ENCODE measurements at regions of chr5 and their contacts with region 1.

Region 1: GRCh38 chr5:79560771-79561524 is 47.0 kb upstream of the HOMER1 start:
- DNase-seq: no peak
- H3K4me3 ChIP-seq: no peak overlapping the region
- H3K27ac ChIP-seq: peak overlapping the region; percentile 59
- H3K4me1 ChIP-seq: peaks cover 23% of the 10 kb centered on the region
- H3K27me3 ChIP-seq: no peaks in the 10 kb centered on the region
- CTCF ChIP-seq: no peak

Region 2: DNA sequence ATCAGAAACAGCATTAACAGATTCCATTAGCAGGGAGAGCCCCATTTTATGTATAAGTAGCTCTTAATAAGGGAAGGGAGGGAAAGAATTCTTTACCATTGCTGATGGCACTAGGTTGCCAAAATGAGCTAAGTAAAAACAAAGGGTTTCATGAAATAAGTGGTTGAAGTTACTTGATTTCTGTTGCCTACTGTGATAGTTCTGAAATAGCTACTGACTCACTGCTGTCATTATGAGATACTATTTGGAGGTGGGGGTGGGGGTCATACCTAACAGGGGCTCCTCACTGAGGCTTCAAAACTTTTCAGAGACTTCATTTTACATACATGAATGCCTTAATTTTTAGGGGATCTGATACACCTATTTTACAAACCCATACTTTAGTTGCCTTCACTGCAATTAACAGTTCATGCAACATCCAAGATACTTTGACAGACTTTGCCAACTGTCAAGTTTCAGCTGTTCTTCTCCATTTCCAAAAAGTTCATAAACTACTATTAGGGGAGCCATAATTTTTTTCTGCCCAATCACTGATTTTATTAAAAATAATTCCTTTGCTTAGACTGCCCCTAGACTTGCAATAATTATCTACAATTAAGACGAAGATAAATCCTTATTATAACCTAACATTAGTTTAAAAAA is 51.6 kb before region 1 on chr5:
- CTCF ChIA-PET with region 1: no interaction called
- POLR2A ChIA-PET with region 1: no interaction called
- intact Hi-C with region 1: loop called (anchors 1 kb)
- DNase-seq: no peak
- H3K4me3 ChIP-seq: peak overlapping the region; percentile 4; the same call in 1 of the 2 replicates
- H3K27ac ChIP-seq: no peak overlapping the region
- H3K4me1 ChIP-seq: peaks cover 60% of the 10 kb centered on the region
- H3K27me3 ChIP-seq: no peaks in the 10 kb centered on the region
- CTCF ChIP-seq: no peak

Region 3: DNA sequence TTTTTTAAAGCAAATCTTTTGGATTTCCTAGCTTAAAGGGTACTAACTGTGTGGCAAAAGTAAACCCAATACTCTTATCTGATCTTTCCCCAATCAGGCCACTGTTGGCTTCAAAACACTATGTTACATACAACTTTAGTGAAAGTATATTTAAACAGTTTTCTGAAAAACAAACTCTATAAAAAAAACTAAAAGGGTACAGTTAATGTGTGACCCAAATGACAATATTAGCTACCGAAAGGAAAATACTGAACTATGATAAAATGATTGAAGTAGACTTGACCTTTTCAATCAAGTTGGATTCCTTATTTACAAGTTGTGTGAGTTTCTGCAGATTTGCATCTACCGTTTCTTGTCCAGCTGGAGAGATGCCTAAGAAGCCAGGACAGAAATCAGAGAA is 424.3 kb after region 1 on chr5:
- CTCF ChIA-PET with region 1: interaction called, 11 read pairs
- POLR2A ChIA-PET with region 1: no interaction called
- intact Hi-C with region 1: no loop called
- DNase-seq: no peak
- H3K4me3 ChIP-seq: no peak overlapping the region
- H3K27ac ChIP-seq: no peak overlapping the region
- H3K4me1 ChIP-seq: peaks cover 10% of the 10 kb centered on the region
- H3K27me3 ChIP-seq: no peaks in the 10 kb centered on the region
- CTCF ChIP-seq: no peak

Region 4: DNA sequence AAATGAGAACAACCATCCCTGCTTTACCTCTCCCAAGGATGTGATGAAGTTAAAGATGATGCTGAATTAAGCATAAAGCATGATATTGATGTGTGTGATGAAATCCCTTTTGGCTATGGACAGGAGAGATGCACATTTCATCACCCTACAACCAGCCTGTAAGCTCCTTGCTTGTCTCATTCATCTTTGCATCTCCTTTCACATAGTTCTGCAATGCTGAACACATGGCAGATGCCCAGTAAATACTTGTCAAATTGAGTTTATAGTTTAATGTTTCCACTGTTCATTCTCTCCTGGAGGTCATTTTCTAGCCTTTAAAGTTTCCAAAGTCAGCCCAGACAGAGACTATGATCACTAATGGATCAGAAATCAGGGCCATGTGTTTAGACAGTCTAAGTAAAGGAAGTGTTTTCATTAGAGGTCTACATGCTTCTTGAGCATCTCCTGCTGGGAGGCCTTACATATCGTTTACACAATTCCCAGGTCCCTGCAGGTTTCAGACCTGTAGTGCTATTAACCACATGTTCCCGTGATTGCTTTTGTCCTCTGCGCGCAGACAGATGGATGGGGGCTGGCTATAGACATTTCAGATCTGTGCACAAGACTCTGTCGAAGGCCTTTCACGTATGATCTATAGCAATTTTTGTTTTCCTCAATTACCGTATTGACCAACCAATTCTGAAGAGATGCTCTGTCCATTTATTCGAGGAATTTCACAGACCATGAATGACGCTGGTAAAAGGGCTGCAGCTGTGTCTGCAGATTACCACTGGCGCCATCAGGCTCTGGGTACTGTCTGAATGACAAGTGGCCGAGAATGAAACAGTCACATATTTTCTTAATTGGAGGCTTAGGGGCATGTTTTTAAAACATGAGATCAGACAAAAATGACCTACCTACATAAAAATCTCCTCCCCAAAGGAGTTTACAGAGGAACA is 1623.1 kb after region 1 on chr5:
- CTCF ChIA-PET with region 1: no interaction called
- POLR2A ChIA-PET with region 1: no interaction called
- intact Hi-C with region 1: no loop called
- DNase-seq: no peak
- H3K4me3 ChIP-seq: no peak overlapping the region
- H3K27ac ChIP-seq: no peak overlapping the region
- H3K4me1 ChIP-seq: no peaks in the 10 kb centered on the region
- H3K27me3 ChIP-seq: no peaks in the 10 kb centered on the region
- CTCF ChIP-seq: no peak

Measured in PC-9 (cell line).